ENCODE measurements at regions of chr7 and their contacts with region 1.

Region 1: GRCh38 chr7:102064361-102065025 is 222.2 kb upstream of the SH2B2 start:
- DNase-seq: peak in 1 of 2 donors; percentile 81
- H3K4me3 ChIP-seq: no peak overlapping the region
- CTCF ChIP-seq: no peak
- POLR2A ChIP-seq: no peak

Region 2: DNA sequence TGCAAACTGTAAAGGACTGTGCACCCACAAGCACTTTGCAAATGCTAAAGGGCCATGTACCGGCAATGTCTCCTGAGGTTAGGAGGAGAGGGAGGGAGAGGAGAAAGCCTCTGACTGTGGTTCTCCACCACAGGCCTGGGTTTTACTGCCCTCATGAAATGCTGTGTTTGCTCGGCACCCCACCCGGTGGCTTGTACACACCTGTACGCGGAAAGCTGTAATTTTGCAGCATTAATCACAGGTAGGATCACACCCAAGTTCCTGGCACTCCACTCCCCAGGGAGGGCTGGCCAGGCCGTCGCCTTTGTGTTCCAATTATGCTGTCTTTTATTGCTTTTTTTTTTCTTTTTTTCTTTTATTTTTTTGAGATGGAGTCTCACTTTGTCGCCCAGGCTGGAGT is 356.9 kb before region 1 on chr7:
- intact Hi-C with region 1: loop called (anchors 2 kb)
- DNase-seq: no peak
- H3K4me3 ChIP-seq: no peak overlapping the region
- CTCF ChIP-seq: no peak
- POLR2A ChIP-seq: no peak

Measured in lower leg skin (tissue), 4 donors.